Psoas muscle (tissue), 8 donors: ENCODE measurements at regions of chr6 and their contacts with region 1.

Region 1: GRCh38 chr6:75376347-75377024 is 91.9 kb upstream of the TMEM30A start:
- DNase-seq: no peak
- ATAC-seq: peak in 2 of 4 donors; percentile 34 to 40
- H3K4me3 ChIP-seq: no peak overlapping the region
- H3K27ac ChIP-seq: peak overlapping the region; percentile 51
- H3K4me1 ChIP-seq: peaks cover 25% of the 10 kb centered on the region
- H3K27me3 ChIP-seq: no peaks in the 10 kb centered on the region
- CTCF ChIP-seq: no peak

Region 2: GRCh38 chr6:75334266-75335040 is 42.0 kb before region 1 on chr6:
- intact Hi-C with region 1: loop called in 1 of 2 experiments (anchors 2 kb)
- DNase-seq: no peak
- ATAC-seq: peak in 3 of 4 donors; percentile 48 to 65 (median 54)
- H3K4me3 ChIP-seq: no peak overlapping the region
- H3K27ac ChIP-seq: no peak overlapping the region
- H3K4me1 ChIP-seq: peaks cover 26% of the 10 kb centered on the region
- H3K27me3 ChIP-seq: no peaks in the 10 kb centered on the region
- CTCF ChIP-seq: no peak

Region 3: GRCh38 chr6:75437421-75437891 is 61.0 kb after region 1 on chr6:
- intact Hi-C with region 1: no loop called
- DNase-seq: peak in 1 of 2 donors; percentile 36
- ATAC-seq: peak; percentile 79 to 93 (median 90)
- H3K4me3 ChIP-seq: no peak overlapping the region
- H3K27ac ChIP-seq: peak overlapping the region; percentile 77
- H3K4me1 ChIP-seq: peaks cover 41% of the 10 kb centered on the region
- H3K27me3 ChIP-seq: no peaks in the 10 kb centered on the region
- CTCF ChIP-seq: no peak

Region 4: GRCh38 chr6:75493400-75494064 is 117.0 kb after region 1 on chr6 and contains the start of gene FILIP1:
- intact Hi-C with region 1: loop called in 1 of 2 experiments (anchors 5 kb)
- DNase-seq: peak; percentile 43 to 81
- ATAC-seq: peak; percentile 92 to 98 (median 94)
- H3K4me3 ChIP-seq: peak within 1 kb of the TSS; percentile 80
- H3K27ac ChIP-seq: peak within 1 kb of the TSS; percentile 97
- H3K4me1 ChIP-seq: peaks cover 46% of the 10 kb centered on the region
- H3K27me3 ChIP-seq: no peaks in the 10 kb centered on the region
- CTCF ChIP-seq: no peak
- total RNA-seq, gene FILIP1: 71.5 to 129 (median 87.1) TPM

Region 5: GRCh38 chr6:75601304-75602245 is 225.1 kb after region 1 on chr6 and contains the start of gene SENP6:
- intact Hi-C with region 1: loop called in 1 of 2 experiments (anchors 10 kb)
- DNase-seq: peak; percentile 84 to 91
- ATAC-seq: peak; percentile 91 to 93 (median 92)
- H3K4me3 ChIP-seq: peak within 1 kb of the TSS; percentile 76
- H3K27ac ChIP-seq: peak within 1 kb of the TSS; percentile 98
- H3K4me1 ChIP-seq: peaks cover 21% of the 10 kb centered on the region
- H3K27me3 ChIP-seq: no peaks in the 10 kb centered on the region
- CTCF ChIP-seq: no peak
- total RNA-seq, gene SENP6: 51.5 to 69.5 (median 63.8) TPM